Right ventricle myocardium superior (tissue), 1 donor: ENCODE measurements at regions of chr9 and their contacts with region 1.

Region 1: GRCh38 chr9:84404095-84404686 is 63.6 kb upstream of the SLC28A3 start:
- DNase-seq: no peak
- ATAC-seq: no peak

Region 2: GRCh38 chr9:84238652-84239051 is 165.5 kb before region 1 on chr9:
- intact Hi-C with region 1: no loop called
- DNase-seq: no peak
- ATAC-seq: no peak

Region 3: GRCh38 chr9:84669288-84670137 is 265.3 kb after region 1 on chr9 and contains the start of gene NTRK2:
- intact Hi-C with region 1: loop called (anchors 10 kb)
- DNase-seq: peak; percentile 66
- ATAC-seq: peak; percentile 51
- total RNA-seq, gene NTRK2: 4.5 TPM